A673 (cell line): ENCODE measurements at regions of chr7 and their contacts with region 1.

Region 1: GRCh38 chr7:22110227-22110839 is 164.6 kb upstream of the CDCA7L start:
- DNase-seq: peak; percentile 92
- H3K4me3 ChIP-seq: no peak overlapping the region
- H3K27ac ChIP-seq: no peak overlapping the region
- H3K4me1 ChIP-seq: peaks cover 5% of the 10 kb centered on the region
- H3K27me3 ChIP-seq: no peaks in the 10 kb centered on the region
- CTCF ChIP-seq: peak; percentile 87

Region 2: DNA sequence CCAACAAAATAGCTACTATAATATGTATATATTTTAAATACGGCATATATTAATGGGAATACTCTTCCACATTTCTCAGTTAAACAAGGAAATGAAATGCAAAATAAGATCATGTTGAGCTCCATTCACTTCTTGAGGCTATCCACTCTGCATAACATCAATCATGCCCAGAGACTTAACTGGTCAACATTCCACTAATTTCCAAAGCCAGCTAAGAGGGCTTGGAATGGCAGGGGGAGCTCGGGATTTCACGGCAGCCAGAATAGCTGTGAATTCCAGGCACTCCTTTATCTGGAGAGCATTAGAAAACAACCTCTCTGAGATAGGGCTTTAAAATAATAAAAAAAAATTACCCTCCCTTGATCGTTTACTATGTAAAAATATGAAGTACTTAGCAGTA is 30.2 kb after region 1 on chr7:
- CTCF ChIA-PET with region 1: no interaction called
- POLR2A ChIA-PET with region 1: no interaction called
- intact Hi-C with region 1: no loop called
- DNase-seq: no peak
- H3K4me3 ChIP-seq: no peak overlapping the region
- H3K27ac ChIP-seq: no peak overlapping the region
- H3K4me1 ChIP-seq: peaks cover 43% of the 10 kb centered on the region
- H3K27me3 ChIP-seq: no peaks in the 10 kb centered on the region
- CTCF ChIP-seq: no peak

Region 3: GRCh38 chr7:22240904-22241571 is 130.7 kb after region 1 on chr7:
- CTCF ChIA-PET with region 1: interaction called, 13 read pairs
- POLR2A ChIA-PET with region 1: no interaction called
- intact Hi-C with region 1: no loop called
- DNase-seq: no peak
- H3K4me3 ChIP-seq: no peak overlapping the region
- H3K27ac ChIP-seq: no peak overlapping the region
- H3K4me1 ChIP-seq: no peaks in the 10 kb centered on the region
- H3K27me3 ChIP-seq: no peaks in the 10 kb centered on the region
- CTCF ChIP-seq: no peak

Region 4: GRCh38 chr7:22255834-22256233 is 145.5 kb after region 1 on chr7:
- CTCF ChIA-PET with region 1: interaction called, 17 read pairs
- POLR2A ChIA-PET with region 1: no interaction called
- intact Hi-C with region 1: loop called (anchors 5 kb)
- DNase-seq: no peak
- H3K4me3 ChIP-seq: no peak overlapping the region
- H3K27ac ChIP-seq: no peak overlapping the region
- H3K4me1 ChIP-seq: peaks cover 24% of the 10 kb centered on the region
- H3K27me3 ChIP-seq: no peaks in the 10 kb centered on the region
- CTCF ChIP-seq: no peak

Region 5: DNA sequence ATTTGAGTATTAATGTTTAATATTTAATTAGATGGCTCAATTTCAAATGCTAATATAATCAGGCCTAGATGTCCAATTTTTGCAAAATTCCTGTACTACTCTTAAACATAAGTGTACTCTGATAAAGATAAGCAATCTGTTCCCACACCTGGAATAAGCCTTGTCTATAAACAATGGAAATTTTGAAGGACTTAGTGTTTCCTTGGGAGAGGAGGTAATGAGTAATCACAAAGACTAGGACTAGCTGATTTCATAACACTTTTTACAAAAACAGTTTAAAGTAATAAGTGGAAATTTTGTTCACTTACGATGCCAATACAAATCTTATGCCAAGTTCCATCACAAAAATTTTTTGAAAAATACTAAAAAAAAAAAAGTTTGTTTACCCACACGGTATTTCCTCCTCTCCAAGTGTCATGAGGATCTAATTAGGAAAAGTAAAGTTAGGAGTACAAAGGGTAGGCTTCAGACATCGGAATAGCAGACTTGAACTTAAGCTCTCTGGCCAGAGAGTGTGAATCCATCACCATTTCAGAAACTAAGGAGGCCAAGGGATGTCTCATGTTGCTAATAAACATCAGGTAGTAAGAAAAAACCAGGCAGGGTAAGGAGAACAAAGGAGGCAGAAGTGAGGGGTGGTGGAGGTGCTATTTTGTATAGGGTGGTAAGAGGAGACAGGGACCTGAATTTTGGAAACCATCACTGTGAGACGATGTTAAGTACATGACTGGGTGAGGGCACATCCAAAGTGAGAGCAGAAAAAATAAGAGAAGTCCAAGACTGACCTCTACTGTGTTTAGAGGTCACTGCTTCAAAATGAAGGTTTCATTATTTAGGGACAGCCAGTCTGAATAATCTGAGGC is 185.3 kb after region 1 on chr7:
- CTCF ChIA-PET with region 1: interaction called, 11 read pairs
- POLR2A ChIA-PET with region 1: no interaction called
- intact Hi-C with region 1: loop called (anchors 5 kb)
- DNase-seq: peak; percentile 18
- H3K4me3 ChIP-seq: no peak overlapping the region
- H3K27ac ChIP-seq: no peak overlapping the region
- H3K4me1 ChIP-seq: peaks cover 5% of the 10 kb centered on the region
- H3K27me3 ChIP-seq: no peaks in the 10 kb centered on the region
- CTCF ChIP-seq: no peak

Region 6: GRCh38 chr7:22373911-22374310 is 263.6 kb after region 1 on chr7:
- CTCF ChIA-PET with region 1: interaction called, 10 read pairs
- POLR2A ChIA-PET with region 1: no interaction called
- intact Hi-C with region 1: no loop called
- DNase-seq: no peak
- H3K4me3 ChIP-seq: no peak overlapping the region
- H3K27ac ChIP-seq: no peak overlapping the region
- H3K4me1 ChIP-seq: no peaks in the 10 kb centered on the region
- H3K27me3 ChIP-seq: no peaks in the 10 kb centered on the region
- CTCF ChIP-seq: no peak

Region 7: GRCh38 chr7:22488643-22489462 is 378.5 kb after region 1 on chr7:
- CTCF ChIA-PET with region 1: interaction called, 9 read pairs
- POLR2A ChIA-PET with region 1: no interaction called
- intact Hi-C with region 1: loop called (anchors 1 kb)
- DNase-seq: peak; percentile 86
- H3K4me3 ChIP-seq: no peak overlapping the region
- H3K27ac ChIP-seq: no peak overlapping the region
- H3K4me1 ChIP-seq: peaks cover 3% of the 10 kb centered on the region
- H3K27me3 ChIP-seq: no peaks in the 10 kb centered on the region
- CTCF ChIP-seq: peak; percentile 92

Region 8: DNA sequence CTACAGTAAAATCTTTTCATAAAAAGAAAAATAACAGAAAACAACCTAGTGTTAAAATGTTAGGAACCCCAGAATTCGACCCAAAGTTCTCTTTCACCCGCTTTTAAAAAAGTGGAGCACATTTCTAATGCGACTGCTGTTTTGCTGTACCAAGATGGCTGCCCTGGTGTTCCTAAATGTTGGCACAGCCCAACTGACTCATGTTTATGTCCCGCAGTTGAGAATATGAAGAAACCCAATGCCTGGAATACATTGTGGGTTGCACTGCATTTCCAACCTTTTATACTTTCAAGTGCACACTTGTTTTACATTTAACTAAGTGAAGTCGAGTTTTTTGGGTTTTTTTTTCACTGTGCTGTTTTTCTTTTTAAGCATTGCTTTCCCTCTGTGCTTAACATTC is 388.7 kb after region 1 on chr7:
- CTCF ChIA-PET with region 1: interaction called, 7 read pairs
- POLR2A ChIA-PET with region 1: no interaction called
- intact Hi-C with region 1: loop called (anchors 2 kb)
- DNase-seq: peak; percentile 39
- H3K4me3 ChIP-seq: peak overlapping the region; percentile 66
- H3K27ac ChIP-seq: peak overlapping the region; percentile 87
- H3K4me1 ChIP-seq: peaks cover 16% of the 10 kb centered on the region
- H3K27me3 ChIP-seq: no peaks in the 10 kb centered on the region
- CTCF ChIP-seq: no peak